RWPE1 (cell line): ENCODE measurements at regions of chr13 and their contacts with region 1.

Region 1: GRCh38 chr13:29550398-29550988 is 45.0 kb downstream of the SLC7A1 start:
- DNase-seq: no peak
- H3K27ac ChIP-seq: 0 out of 2 replicates have a peak overlapping the region, but pooled peaks have one; percentile 1
- CTCF ChIP-seq: no peak

Region 2: GRCh38 chr13:28199089-28199488 is 1351.4 kb before region 1 on chr13:
- CTCF ChIA-PET with region 1: interaction called, 10 read pairs
- POLR2A ChIA-PET with region 1: no interaction called
- DNase-seq: no peak
- H3K27ac ChIP-seq: no peak overlapping the region
- CTCF ChIP-seq: no peak

Region 3: DNA sequence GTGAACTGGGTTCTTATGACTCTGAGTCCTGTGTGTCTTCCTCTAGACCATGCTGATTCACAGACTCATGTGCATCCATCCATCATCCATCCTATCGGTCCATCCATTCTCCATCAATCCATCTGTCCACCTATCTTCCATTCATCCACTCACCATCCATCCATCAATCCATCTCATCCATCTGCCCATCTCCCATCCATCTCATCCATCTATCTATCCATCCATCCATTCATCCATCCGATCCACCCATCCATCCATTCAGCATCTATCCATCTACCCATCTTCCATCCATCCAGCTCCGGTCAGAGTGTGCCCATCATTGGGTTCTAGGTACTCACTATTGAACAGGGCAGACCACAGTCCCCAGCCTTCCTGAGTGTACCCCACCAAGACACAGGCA is 30.6 kb before region 1 on chr13:
- CTCF ChIA-PET with region 1: no interaction called
- POLR2A ChIA-PET with region 1: no interaction called
- DNase-seq: no peak
- H3K27ac ChIP-seq: no peak overlapping the region
- CTCF ChIP-seq: no peak

Region 4: GRCh38 chr13:29605860-29606526 is 55.5 kb after region 1 on chr13:
- CTCF ChIA-PET with region 1: no interaction called
- POLR2A ChIA-PET with region 1: no interaction called
- DNase-seq: no peak
- H3K27ac ChIP-seq: no peak overlapping the region
- CTCF ChIP-seq: no peak

Region 5: GRCh38 chr13:29621051-29621757 is 70.7 kb after region 1 on chr13:
- CTCF ChIA-PET with region 1: no interaction called
- POLR2A ChIA-PET with region 1: no interaction called
- DNase-seq: no peak
- H3K27ac ChIP-seq: no peak overlapping the region
- CTCF ChIP-seq: no peak

Region 6: DNA sequence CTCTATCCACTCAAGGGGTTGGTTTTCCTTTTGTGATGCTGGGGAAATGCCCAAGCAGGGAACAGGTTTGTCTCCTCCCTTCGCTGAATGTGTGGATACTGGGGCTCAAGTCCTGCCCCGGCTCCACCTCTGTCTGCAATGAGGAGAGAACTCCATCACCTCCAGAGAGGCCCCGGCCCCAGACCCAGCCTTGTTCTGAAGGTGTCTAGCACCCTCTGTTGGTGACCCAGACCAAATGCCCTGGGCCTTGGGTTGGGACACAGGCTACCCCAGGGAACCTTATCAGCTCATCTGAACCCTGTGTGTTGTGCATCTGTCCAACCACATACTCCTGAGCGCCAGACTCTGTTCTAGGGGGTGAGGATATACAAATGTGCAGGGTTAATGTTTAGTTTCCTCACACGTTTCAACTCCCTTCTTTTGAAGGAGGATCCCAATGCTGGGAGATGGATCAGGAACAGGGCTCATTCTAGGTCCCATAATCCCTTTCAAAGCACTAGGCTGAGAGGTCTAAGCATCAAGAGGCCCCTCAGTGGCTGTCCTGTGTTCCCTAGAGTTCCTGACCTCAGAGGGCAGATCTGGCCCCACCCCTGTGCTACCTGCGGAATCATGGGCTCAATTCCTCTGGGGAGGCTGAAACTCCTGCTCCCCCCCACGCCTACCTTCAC is 157.5 kb after region 1 on chr13:
- CTCF ChIA-PET with region 1: no interaction called
- POLR2A ChIA-PET with region 1: no interaction called
- DNase-seq: peak; percentile 58
- H3K27ac ChIP-seq: no peak overlapping the region
- CTCF ChIP-seq: peak; percentile 35; the same call in 1 of the 2 replicates